H1 (cell line): ENCODE measurements at regions of chr17 and their contacts with region 1.

Region 1: DNA sequence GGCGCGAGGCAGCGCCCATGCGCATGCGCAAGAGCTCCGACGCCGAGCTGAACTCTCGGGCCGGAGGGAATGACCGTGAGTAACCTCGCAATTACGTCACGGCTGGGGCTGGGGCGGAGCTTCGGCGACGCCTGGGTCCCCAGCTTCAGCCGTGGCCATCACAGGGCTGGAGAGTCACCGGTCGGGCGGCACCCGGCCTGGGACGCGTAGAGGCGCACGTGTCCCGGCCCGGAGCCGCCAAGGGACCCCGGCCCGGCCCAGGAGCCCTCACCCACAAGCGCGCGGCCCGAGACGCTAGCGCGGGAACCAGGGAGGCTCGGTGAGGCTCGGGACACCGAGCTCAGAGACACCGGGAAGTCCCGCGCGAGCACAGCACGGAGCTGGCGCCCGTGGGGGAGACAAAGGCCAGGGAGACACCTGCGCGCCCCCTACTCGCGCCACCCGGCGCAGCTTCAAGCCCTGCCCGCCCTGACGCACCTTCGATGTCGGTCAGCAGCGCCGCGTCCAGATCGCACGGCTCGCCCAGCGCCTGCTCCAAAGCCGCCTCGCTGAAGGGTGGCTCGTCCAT is 452 bp downstream of the SREBF1 start:
- DNase-seq: peak; percentile 89 to 99
- H3K4me3 ChIP-seq: peak overlapping the region; percentile 81 to 99 (median 96)
- H3K27ac ChIP-seq: peak overlapping the region; percentile 93
- H3K4me1 ChIP-seq: peaks cover 19 to 48% (median 39%) of the 10 kb centered on the region in 4 experiments
- H3K27me3 ChIP-seq: no peaks in the 10 kb centered on the region
- CTCF ChIP-seq: no peak
- EP300 ChIP-seq: peak in 1 of 2 experiments; percentile 5; a peak in 1 of 3 replicates
- POLR2A ChIP-seq: peak; percentile 81 to 99
- RAD21 ChIP-seq: peak in 1 of 2 experiments; percentile 2; a peak in 1 of 4 replicates

Region 2: GRCh38 chr17:17591355-17592298 is 244.7 kb before region 1 on chr17 and contains the start of gene PEMT:
- CTCF ChIA-PET with region 1: no interaction called
- POLR2A ChIA-PET with region 1: no interaction called
- DNase-seq: peak; percentile 90 to 93
- H3K4me3 ChIP-seq: peak within 1 kb of the TSS; percentile 69 to 87 (median 86)
- H3K27ac ChIP-seq: peak within 1 kb of the TSS; percentile 60; the same call in 1 of the 2 replicates
- H3K4me1 ChIP-seq: peaks cover 0 to 10% (median 2%) of the 10 kb centered on the region in 4 experiments; a peak in 4 of 7 replicates
- H3K27me3 ChIP-seq: no peaks in the 10 kb centered on the region
- CTCF ChIP-seq: no peak
- EP300 ChIP-seq: peak in 1 of 2 experiments; percentile 9; a peak in 1 of 3 replicates
- POLR2A ChIP-seq: peak; percentile 4 to 78; a peak in 2 of 3 replicates
- RAD21 ChIP-seq: no peak
- total RNA-seq, gene PEMT: 40.1 and 42.0 TPM in 2 replicates

Region 3: DNA sequence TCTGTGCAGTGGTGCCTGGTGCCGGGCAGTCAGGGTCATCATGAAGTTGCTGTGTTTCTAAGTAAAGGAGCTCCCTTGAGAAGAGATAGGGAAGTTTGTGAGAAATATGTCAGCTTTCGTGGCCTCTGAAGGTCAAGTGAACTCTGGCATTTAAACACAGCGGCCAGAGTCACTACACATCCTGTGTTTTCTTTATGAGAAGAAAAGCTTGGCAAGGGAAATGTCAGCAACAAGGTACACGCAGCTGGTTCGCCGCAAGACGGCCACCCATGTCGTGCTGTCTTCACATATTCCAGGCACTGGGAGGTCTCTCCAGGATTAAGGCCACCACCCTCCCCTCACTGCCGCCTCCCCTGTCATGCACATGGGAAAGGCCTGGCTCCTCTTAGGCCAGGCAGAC is 211.6 kb before region 1 on chr17:
- CTCF ChIA-PET with region 1: no interaction called
- POLR2A ChIA-PET with region 1: no interaction called
- DNase-seq: no peak
- H3K4me3 ChIP-seq: no peak overlapping the region
- H3K27ac ChIP-seq: no peak overlapping the region
- H3K4me1 ChIP-seq: peaks cover 0 to 18% (median 15%) of the 10 kb centered on the region in 4 experiments; a peak in 6 of 7 replicates
- H3K27me3 ChIP-seq: no peaks in the 10 kb centered on the region
- CTCF ChIP-seq: no peak
- EP300 ChIP-seq: no peak
- POLR2A ChIP-seq: no peak
- RAD21 ChIP-seq: no peak

Region 4: GRCh38 chr17:17800504-17801021 is 35.8 kb before region 1 on chr17:
- CTCF ChIA-PET with region 1: interaction called, 4 read pairs
- POLR2A ChIA-PET with region 1: interaction called, 14 read pairs
- DNase-seq: no peak
- H3K4me3 ChIP-seq: no peak overlapping the region
- H3K27ac ChIP-seq: no peak overlapping the region
- H3K4me1 ChIP-seq: peaks cover 0 to 9% (median 0%) of the 10 kb centered on the region in 4 experiments; a peak in 3 of 7 replicates
- H3K27me3 ChIP-seq: no peaks in the 10 kb centered on the region
- CTCF ChIP-seq: peak; percentile 9 to 25 (median 23)
- EP300 ChIP-seq: no peak
- POLR2A ChIP-seq: no peak
- RAD21 ChIP-seq: peak; percentile 24 to 49; a peak in 3 of 4 replicates

Region 5: GRCh38 chr17:17823433-17824118 is 12.8 kb before region 1 on chr17:
- CTCF ChIA-PET with region 1: interaction called, 66 read pairs
- POLR2A ChIA-PET with region 1: interaction called, 532 read pairs
- DNase-seq: peak in 1 of 2 experiments; percentile 93
- H3K4me3 ChIP-seq: peak overlapping the region in 3 of 4 experiments; percentile 29 to 51 (median 38); a peak in 7 of 8 replicates
- H3K27ac ChIP-seq: peak overlapping the region; percentile 78
- H3K4me1 ChIP-seq: peaks cover 13 to 37% (median 27%) of the 10 kb centered on the region in 4 experiments
- H3K27me3 ChIP-seq: no peaks in the 10 kb centered on the region; a peak in 1 of 7 replicates
- CTCF ChIP-seq: no peak
- EP300 ChIP-seq: peak in 1 of 2 experiments; percentile 87; a peak in 2 of 3 replicates
- POLR2A ChIP-seq: no peak
- RAD21 ChIP-seq: no peak

Region 6: GRCh38 chr17:17859909-17860765 is 23.8 kb after region 1 on chr17:
- CTCF ChIA-PET with region 1: interaction called, 26 read pairs
- POLR2A ChIA-PET with region 1: interaction called, 122 read pairs
- DNase-seq: peak in 1 of 2 experiments; percentile 86
- H3K4me3 ChIP-seq: no peak overlapping the region
- H3K27ac ChIP-seq: no peak overlapping the region
- H3K4me1 ChIP-seq: peaks cover 0 to 10% (median 3%) of the 10 kb centered on the region in 4 experiments; a peak in 2 of 7 replicates
- H3K27me3 ChIP-seq: no peaks in the 10 kb centered on the region
- CTCF ChIP-seq: peak; percentile 96 to 100 (median 99)
- EP300 ChIP-seq: peak in 1 of 2 experiments; percentile 63; a peak in 1 of 3 replicates
- POLR2A ChIP-seq: no peak
- RAD21 ChIP-seq: peak; percentile 94 to 96

Region 7: GRCh38 chr17:17877529-17878358 is 41.4 kb after region 1 on chr17:
- CTCF ChIA-PET with region 1: interaction called, 3 read pairs
- POLR2A ChIA-PET with region 1: interaction called, 10 read pairs
- DNase-seq: no peak
- H3K4me3 ChIP-seq: no peak overlapping the region
- H3K27ac ChIP-seq: no peak overlapping the region
- H3K4me1 ChIP-seq: peaks cover 11 to 28% (median 18%) of the 10 kb centered on the region in 4 experiments
- H3K27me3 ChIP-seq: no peaks in the 10 kb centered on the region; a peak in 1 of 7 replicates
- CTCF ChIP-seq: 0 out of 4 replicates have a peak, but pooled peaks of 1 of the 3 experiments have one; percentile 6
- EP300 ChIP-seq: no peak
- POLR2A ChIP-seq: no peak
- RAD21 ChIP-seq: no peak

Region 8: DNA sequence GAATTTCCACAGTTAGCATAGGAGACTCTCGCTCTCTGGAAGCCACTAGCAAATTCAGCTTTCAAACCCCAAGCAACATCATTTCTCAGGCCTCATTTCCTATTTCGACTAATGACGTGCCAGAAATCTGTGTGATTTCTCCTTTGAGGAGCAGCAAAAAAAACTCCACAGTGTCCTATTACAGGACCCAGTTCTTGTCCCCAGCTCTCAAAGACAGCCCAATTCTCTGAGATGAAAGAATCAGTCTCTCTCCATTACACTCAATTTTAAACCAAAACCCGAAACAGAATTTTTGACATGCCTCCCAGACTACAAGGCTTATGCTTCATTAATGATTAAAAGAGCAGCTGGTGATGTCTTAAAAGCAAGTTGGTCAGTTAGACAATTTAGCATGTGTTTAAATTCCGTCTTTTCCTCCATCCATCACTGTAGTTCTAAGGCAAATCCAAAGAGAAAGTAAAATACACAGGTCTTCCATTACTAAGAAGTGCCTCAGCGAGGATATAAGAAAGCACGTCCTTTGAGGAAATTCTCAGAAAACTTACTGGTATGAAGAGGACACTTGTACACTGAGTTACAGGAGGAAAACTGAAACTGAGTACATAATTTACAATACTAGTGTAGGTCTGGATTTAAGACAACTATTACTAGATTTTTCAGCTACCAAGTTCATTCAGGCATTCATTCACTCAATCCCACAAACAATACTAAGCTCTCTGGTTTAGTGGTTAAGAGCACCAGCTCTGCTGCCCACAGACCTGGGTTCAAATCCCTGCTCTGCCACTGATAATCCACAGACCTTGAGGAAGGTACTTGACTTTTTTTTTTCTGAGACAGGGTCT is 123.4 kb after region 1 on chr17:
- CTCF ChIA-PET with region 1: no interaction called
- POLR2A ChIA-PET with region 1: no interaction called
- DNase-seq: no peak
- H3K4me3 ChIP-seq: no peak overlapping the region
- H3K27ac ChIP-seq: no peak overlapping the region
- H3K4me1 ChIP-seq: peaks cover 0 to 6% (median 0%) of the 10 kb centered on the region in 4 experiments; a peak in 1 of 7 replicates
- H3K27me3 ChIP-seq: no peaks in the 10 kb centered on the region
- CTCF ChIP-seq: no peak
- EP300 ChIP-seq: no peak
- POLR2A ChIP-seq: no peak
- RAD21 ChIP-seq: no peak